PC-9 (cell line): ENCODE measurements at regions of chr5 and their contacts with region 1.

Region 1: DNA sequence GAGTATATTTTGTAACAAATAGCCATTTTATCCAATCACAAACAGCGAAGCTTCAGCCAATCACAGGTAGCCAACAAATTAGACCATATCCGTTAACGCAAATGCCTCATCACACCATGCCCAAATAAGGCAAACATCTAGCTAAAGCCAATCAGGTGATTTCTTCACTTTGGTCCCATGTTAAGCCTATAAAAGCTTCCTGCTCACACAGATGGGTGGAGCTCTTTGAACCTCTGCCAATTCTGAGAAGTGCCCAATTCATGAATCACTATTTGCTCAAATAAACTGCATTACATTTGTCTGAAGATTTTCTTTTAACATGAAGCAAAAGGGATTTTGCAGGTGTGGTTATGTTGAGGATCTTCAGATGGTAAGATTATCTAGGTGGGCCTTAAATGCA is 127.6 kb upstream of the TARS1 start:
- DNase-seq: peak; percentile 73 to 81
- H3K4me3 ChIP-seq: no peak overlapping the region
- H3K27ac ChIP-seq: peak overlapping the region; percentile 17; the same call in 1 of the 2 replicates
- H3K4me1 ChIP-seq: peaks cover 11% of the 10 kb centered on the region
- H3K27me3 ChIP-seq: no peaks in the 10 kb centered on the region
- CTCF ChIP-seq: no peak

Region 2: DNA sequence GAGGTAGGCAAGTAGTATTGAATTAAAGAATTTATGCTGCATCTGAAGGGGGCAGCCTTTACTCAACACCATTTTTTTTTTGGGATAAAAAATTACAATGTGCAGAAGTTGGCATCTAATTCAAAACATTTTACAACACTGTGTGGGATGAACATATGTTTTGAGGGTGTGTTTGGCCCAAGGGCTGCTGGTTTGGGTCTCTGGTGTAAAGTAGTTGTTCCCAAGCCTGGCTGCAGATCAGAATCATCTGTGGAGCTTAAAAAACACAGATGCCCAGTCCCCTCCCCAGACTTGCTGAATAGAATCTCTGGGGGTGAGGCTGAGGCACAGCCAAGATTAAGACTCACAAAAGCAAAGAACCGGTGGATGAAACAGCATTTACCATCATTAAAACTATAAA is 1707.2 kb before region 1 on chr5:
- CTCF ChIA-PET with region 1: no interaction called
- POLR2A ChIA-PET with region 1: interaction called, 27 read pairs
- intact Hi-C with region 1: no loop called
- DNase-seq: no peak
- H3K4me3 ChIP-seq: no peak overlapping the region
- H3K27ac ChIP-seq: no peak overlapping the region
- H3K4me1 ChIP-seq: no peaks in the 10 kb centered on the region
- H3K27me3 ChIP-seq: peaks cover 99% of the 10 kb centered on the region
- CTCF ChIP-seq: no peak

Region 3: DNA sequence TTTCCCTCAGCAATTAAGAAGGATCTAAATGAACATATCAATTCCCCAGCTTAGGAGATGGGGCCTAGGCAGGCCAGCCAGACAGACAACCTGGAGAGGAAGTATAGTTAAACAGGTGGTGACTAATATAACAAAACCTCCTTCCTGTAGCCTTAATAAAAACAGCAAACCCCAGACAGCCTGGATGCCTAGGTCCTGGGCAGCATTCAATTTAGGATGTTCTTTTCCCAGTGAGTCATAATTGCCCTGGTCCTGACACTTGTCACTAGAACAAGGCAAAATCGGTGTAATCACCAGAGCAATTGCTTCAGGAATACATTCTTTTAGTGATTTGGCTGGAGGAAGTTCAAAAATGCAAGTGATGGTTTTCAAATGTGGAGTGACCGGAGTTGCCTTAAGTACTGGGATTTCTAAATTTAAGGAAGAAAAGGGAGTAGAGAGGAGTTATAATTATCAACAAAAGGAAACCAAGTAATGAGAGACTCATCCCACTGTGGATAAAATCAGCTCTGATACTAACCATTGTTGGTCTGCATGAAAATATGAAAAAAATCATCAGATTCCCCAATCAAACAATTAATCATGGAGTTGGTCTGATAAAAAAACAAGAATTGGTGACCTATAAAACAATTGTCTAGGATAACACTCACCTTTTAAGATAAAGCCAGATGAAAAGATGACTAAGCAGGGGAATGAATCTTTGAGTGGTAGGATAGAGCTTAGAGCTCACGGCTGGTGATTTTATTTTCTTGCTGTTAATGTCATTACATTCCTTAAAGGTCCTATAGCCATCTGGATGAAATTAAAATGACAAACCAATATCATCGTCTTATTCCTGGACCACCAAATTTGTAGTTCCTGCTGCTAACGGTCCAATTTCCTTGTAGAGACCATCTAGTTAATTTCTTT is 88.6 kb after region 1 on chr5:
- CTCF ChIA-PET with region 1: no interaction called
- POLR2A ChIA-PET with region 1: no interaction called
- intact Hi-C with region 1: loop called (anchors 1 kb)
- DNase-seq: peak; percentile 76 to 92
- H3K4me3 ChIP-seq: no peak overlapping the region
- H3K27ac ChIP-seq: peak overlapping the region; percentile 61
- H3K4me1 ChIP-seq: peaks cover 32% of the 10 kb centered on the region
- H3K27me3 ChIP-seq: no peaks in the 10 kb centered on the region
- CTCF ChIP-seq: no peak